CD8-positive, alpha-beta T cell (primary cell): ENCODE measurements at regions of chr11 and their contacts with region 1.

Region 1: GRCh38 chr11:118145285-118146227 is 7.1 kb downstream of the SCN4B start:
- DNase-seq: peak; percentile 73 to 91 (median 88)
- ATAC-seq: peak; percentile 97
- H3K4me3 ChIP-seq: peak overlapping the region; percentile 57 to 63
- H3K4me3 Mint-ChIP-seq: peak overlapping the region; percentile 86
- H3K27ac ChIP-seq: no peak overlapping the region
- H3K27ac Mint-ChIP-seq: no peak overlapping the region
- H3K4me1 ChIP-seq: peaks cover 3% of the 10 kb centered on the region
- H3K4me1 Mint-ChIP-seq: peaks cover 3% of the 10 kb centered on the region
- H3K27me3 ChIP-seq: peaks cover 11% of the 10 kb centered on the region in 2 experiments
- H3K27me3 Mint-ChIP-seq: peaks cover 35% of the 10 kb centered on the region
- CTCF ChIP-seq: peak; percentile 67

Region 2: DNA sequence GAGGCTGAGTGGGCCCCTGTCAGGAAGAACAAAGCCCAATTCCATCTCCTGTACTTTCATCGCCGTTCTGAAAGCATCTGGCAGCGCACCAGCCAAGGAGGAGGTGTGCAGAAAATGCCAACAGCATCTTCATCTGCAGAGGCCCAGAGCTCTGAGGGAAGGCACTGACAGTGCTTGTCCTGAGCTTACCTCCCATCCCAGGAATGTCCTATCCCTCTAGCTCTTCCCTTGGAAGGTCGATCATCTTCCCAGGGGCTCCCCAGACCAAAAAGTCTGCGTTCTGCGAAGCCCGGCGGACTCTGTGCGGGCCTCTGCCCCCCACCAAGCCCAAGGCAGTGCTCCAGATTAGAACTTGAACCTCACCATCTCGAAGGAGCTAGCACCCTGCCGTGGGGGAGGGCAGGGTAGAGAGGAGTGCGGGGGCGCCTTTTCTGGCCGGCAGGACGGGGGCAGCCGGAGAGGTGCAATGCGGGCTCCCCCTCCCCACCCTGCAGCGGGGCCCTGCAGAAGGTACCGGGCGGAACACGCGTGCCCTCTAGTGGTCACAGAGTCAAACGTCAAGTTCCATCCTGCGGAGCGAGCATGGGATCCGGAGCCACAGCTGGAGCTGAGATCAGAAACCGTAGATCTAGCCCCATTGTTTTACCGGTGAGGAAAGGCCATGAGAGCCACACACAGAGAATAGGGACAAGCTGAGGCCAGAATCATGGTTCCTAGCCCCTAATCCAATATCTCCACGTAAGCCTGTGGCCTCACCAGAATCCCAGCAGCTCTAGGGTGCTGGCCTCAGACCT is 25.9 kb after region 1 on chr11:
- CTCF ChIA-PET with region 1: interaction called, 106 read pairs
- POLR2A ChIA-PET with region 1: no interaction called
- intact Hi-C with region 1: loop called (anchors 1 kb)
- DNase-seq: peak; percentile 45 to 83 (median 72)
- ATAC-seq: peak; percentile 96
- H3K4me3 ChIP-seq: no peak overlapping the region
- H3K4me3 Mint-ChIP-seq: no peak overlapping the region
- H3K27ac ChIP-seq: no peak overlapping the region
- H3K27ac Mint-ChIP-seq: no peak overlapping the region
- H3K4me1 ChIP-seq: peaks cover 8% of the 10 kb centered on the region
- H3K4me1 Mint-ChIP-seq: peaks cover 2% of the 10 kb centered on the region
- H3K27me3 ChIP-seq: no peaks in the 10 kb centered on the region
- H3K27me3 Mint-ChIP-seq: peaks cover 3% of the 10 kb centered on the region
- CTCF ChIP-seq: peak; percentile 95

Region 3: GRCh38 chr11:118240999-118241768 is 95.6 kb after region 1 on chr11:
- CTCF ChIA-PET with region 1: no interaction called
- POLR2A ChIA-PET with region 1: no interaction called
- intact Hi-C with region 1: no loop called
- DNase-seq: peak in 8 of 9 experiments; percentile 36 to 89 (median 69)
- ATAC-seq: peak; percentile 92
- H3K4me3 ChIP-seq: peak overlapping the region in 1 of 2 experiments; percentile 2
- H3K4me3 Mint-ChIP-seq: peak overlapping the region; percentile 56
- H3K27ac ChIP-seq: peak overlapping the region; percentile 22 to 74
- H3K27ac Mint-ChIP-seq: peak overlapping the region; percentile 85
- H3K4me1 ChIP-seq: peaks cover 35% of the 10 kb centered on the region
- H3K4me1 Mint-ChIP-seq: peaks cover 72% of the 10 kb centered on the region
- H3K27me3 ChIP-seq: no peaks in the 10 kb centered on the region
- H3K27me3 Mint-ChIP-seq: no peaks in the 10 kb centered on the region
- CTCF ChIP-seq: no peak

Region 4: DNA sequence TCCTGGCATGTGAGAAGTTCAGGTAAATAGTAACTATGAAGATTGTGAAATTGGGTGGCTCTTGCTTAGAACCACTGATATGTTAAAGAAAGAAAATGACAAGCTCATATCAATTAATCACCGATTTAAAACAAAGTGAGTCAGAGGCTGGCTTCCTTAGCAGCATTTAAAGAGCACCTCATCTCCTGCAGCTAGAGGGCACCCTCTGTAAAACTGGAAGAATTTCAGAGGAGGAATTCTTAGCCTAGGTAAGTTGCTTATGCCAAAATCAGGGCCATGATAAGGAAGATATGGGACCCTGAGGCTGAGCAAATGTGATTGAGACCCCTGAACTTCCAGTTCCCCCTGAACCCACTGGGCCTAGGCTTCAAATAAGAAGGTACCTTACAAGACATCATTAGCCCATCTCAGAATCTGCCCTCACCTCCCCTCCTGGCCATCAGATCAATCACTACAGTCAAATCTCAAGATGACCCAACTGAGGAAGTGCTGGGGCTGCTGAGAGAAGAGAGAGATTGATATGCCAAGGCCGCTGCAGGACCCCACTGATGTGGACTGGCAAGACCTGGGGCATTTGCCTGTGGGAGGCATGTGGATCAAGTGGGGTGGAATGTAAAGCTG is 150.4 kb after region 1 on chr11:
- CTCF ChIA-PET with region 1: interaction called, 16 read pairs
- POLR2A ChIA-PET with region 1: no interaction called
- intact Hi-C with region 1: loop called (anchors 1 to 2 kb)
- DNase-seq: peak in 7 of 9 experiments; percentile 22 to 79 (median 59)
- ATAC-seq: peak; percentile 81
- H3K4me3 ChIP-seq: no peak overlapping the region
- H3K4me3 Mint-ChIP-seq: no peak overlapping the region
- H3K27ac ChIP-seq: peak overlapping the region in 1 of 2 experiments; percentile 52
- H3K27ac Mint-ChIP-seq: peak overlapping the region; percentile 46
- H3K4me1 ChIP-seq: peaks cover 7% of the 10 kb centered on the region
- H3K4me1 Mint-ChIP-seq: peaks cover 27% of the 10 kb centered on the region
- H3K27me3 ChIP-seq: no peaks in the 10 kb centered on the region
- H3K27me3 Mint-ChIP-seq: no peaks in the 10 kb centered on the region
- CTCF ChIP-seq: peak; percentile 64

Region 5: GRCh38 chr11:118359295-118359958 is 213.9 kb after region 1 on chr11 and contains the start of gene UBE4A:
- CTCF ChIA-PET with region 1: no interaction called
- POLR2A ChIA-PET with region 1: no interaction called
- intact Hi-C with region 1: loop called in 1 of 2 experiments (anchors 2 kb)
- DNase-seq: peak; percentile 93 to 100 (median 99)
- ATAC-seq: peak; percentile 80
- H3K4me3 ChIP-seq: peak within 1 kb of the TSS; percentile 66 to 89
- H3K4me3 Mint-ChIP-seq: peak within 1 kb of the TSS; percentile 93
- H3K27ac ChIP-seq: peak within 1 kb of the TSS; percentile 89 to 93
- H3K27ac Mint-ChIP-seq: peak within 1 kb of the TSS; percentile 98
- H3K4me1 ChIP-seq: peaks cover 38% of the 10 kb centered on the region
- H3K4me1 Mint-ChIP-seq: peaks cover 52% of the 10 kb centered on the region
- H3K27me3 ChIP-seq: no peaks in the 10 kb centered on the region
- H3K27me3 Mint-ChIP-seq: no peaks in the 10 kb centered on the region
- CTCF ChIP-seq: no peak
- total RNA-seq, gene UBE4A: 53.7 to 57.5 TPM

Region 6: DNA sequence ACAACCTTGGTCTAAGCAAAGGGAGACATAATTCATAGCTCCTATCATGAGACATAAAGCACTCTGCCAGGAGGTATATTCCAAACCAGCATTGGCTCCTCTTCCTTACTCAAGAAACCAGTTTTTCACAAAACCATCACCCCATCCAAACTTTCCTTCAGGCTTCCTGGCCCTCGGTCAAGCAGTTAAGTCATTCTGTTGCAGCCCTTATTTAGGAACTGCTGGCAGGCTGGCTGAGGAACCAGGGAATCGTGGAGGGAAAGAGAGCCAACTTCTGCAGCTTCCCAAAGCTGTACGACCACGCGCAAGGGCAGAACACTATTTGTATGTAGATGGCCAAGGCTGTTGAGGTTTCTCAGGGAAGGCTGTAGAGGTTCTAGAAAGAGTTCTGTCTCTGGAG is 419.5 kb after region 1 on chr11:
- CTCF ChIA-PET with region 1: no interaction called
- POLR2A ChIA-PET with region 1: no interaction called
- intact Hi-C with region 1: loop called (anchors 1 kb)
- DNase-seq: peak in 2 of 9 experiments; percentile 15 to 47
- ATAC-seq: no peak
- H3K4me3 ChIP-seq: no peak overlapping the region
- H3K4me3 Mint-ChIP-seq: peak overlapping the region; percentile 71
- H3K27ac ChIP-seq: no peak overlapping the region
- H3K27ac Mint-ChIP-seq: peak overlapping the region; percentile 78
- H3K4me1 ChIP-seq: peaks cover 5% of the 10 kb centered on the region
- H3K4me1 Mint-ChIP-seq: peaks cover 22% of the 10 kb centered on the region
- H3K27me3 ChIP-seq: no peaks in the 10 kb centered on the region
- H3K27me3 Mint-ChIP-seq: no peaks in the 10 kb centered on the region
- CTCF ChIP-seq: no peak

Region 7: GRCh38 chr11:118659314-118659952 is 513.9 kb after region 1 on chr11:
- CTCF ChIA-PET with region 1: interaction called, 4 read pairs
- POLR2A ChIA-PET with region 1: no interaction called
- intact Hi-C with region 1: loop called (anchors 1 to 2 kb)
- DNase-seq: peak; percentile 80 to 92 (median 89)
- ATAC-seq: peak; percentile 100
- H3K4me3 ChIP-seq: no peak overlapping the region
- H3K4me3 Mint-ChIP-seq: no peak overlapping the region
- H3K27ac ChIP-seq: no peak overlapping the region
- H3K27ac Mint-ChIP-seq: no peak overlapping the region
- H3K4me1 ChIP-seq: peaks cover 12% of the 10 kb centered on the region
- H3K4me1 Mint-ChIP-seq: peaks cover 7% of the 10 kb centered on the region
- H3K27me3 ChIP-seq: no peaks in the 10 kb centered on the region
- H3K27me3 Mint-ChIP-seq: peaks cover 3% of the 10 kb centered on the region
- CTCF ChIP-seq: peak; percentile 99